Mammary epithelial cell (primary cell): ENCODE measurements at regions of chr15 and their contacts with region 1.

Region 1: GRCh38 chr15:86624261-86625036 is 544.8 kb downstream of the AGBL1 start:
- DNase-seq: peak; percentile 95
- H3K4me3 ChIP-seq: no peak overlapping the region
- H3K27ac ChIP-seq: no peak overlapping the region
- H3K4me1 ChIP-seq: peaks cover 19% of the 10 kb centered on the region
- H3K27me3 ChIP-seq: no peaks in the 10 kb centered on the region
- CTCF ChIP-seq: peak; percentile 58 to 72

Region 2: GRCh38 chr15:85858586-85859375 is 765.7 kb before region 1 on chr15:
- CTCF ChIA-PET with region 1: no interaction called
- dilution Hi-C with region 1: no loop called
- in situ Hi-C with region 1: loop called in 1 of 2 experiments (anchors 25 kb)
- intact Hi-C with region 1: no loop called
- DNase-seq: peak; percentile 48
- H3K4me3 ChIP-seq: no peak overlapping the region
- H3K27ac ChIP-seq: no peak overlapping the region
- H3K4me1 ChIP-seq: peaks cover 3% of the 10 kb centered on the region
- H3K27me3 ChIP-seq: no peaks in the 10 kb centered on the region
- CTCF ChIP-seq: peak; percentile 65 to 81

Region 3: GRCh38 chr15:86231864-86232721 is 392.4 kb before region 1 on chr15:
- CTCF ChIA-PET with region 1: no interaction called
- dilution Hi-C with region 1: no loop called
- in situ Hi-C with region 1: no loop called
- intact Hi-C with region 1: loop called (anchors 1 kb)
- DNase-seq: peak; percentile 29
- H3K4me3 ChIP-seq: no peak overlapping the region
- H3K27ac ChIP-seq: no peak overlapping the region
- H3K4me1 ChIP-seq: peaks cover 3% of the 10 kb centered on the region
- H3K27me3 ChIP-seq: no peaks in the 10 kb centered on the region
- CTCF ChIP-seq: peak; percentile 64 to 75

Region 4: GRCh38 chr15:86657305-86657704 is 32.9 kb after region 1 on chr15:
- CTCF ChIA-PET with region 1: no interaction called
- dilution Hi-C with region 1: no loop called
- in situ Hi-C with region 1: no loop called
- intact Hi-C with region 1: no loop called
- DNase-seq: no peak
- H3K4me3 ChIP-seq: no peak overlapping the region
- H3K27ac ChIP-seq: no peak overlapping the region
- H3K4me1 ChIP-seq: no peaks in the 10 kb centered on the region
- H3K27me3 ChIP-seq: no peaks in the 10 kb centered on the region
- CTCF ChIP-seq: no peak

Region 5: DNA sequence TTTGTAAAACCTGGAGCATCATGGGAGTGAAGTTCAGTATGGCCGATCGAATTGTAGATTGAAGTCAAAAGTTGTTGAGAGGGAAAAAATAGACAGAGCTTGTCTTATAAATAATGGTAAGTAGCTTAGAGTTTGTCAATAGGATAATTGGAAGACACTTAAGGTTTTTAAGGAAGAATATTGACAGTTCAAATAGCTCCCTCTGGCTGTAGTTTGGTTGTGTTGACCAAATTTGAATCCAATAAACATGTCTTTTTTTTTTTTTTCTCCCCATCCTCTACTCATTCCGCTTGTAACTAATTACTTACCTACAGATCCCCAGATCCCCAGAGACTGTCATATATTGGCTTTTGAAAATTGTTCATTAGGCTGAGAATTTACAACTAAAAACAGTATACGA is 132.2 kb after region 1 on chr15:
- CTCF ChIA-PET with region 1: interaction called, 7 read pairs
- dilution Hi-C with region 1: no loop called
- in situ Hi-C with region 1: no loop called
- intact Hi-C with region 1: loop called (anchors 1 kb)
- DNase-seq: no peak
- H3K4me3 ChIP-seq: no peak overlapping the region
- H3K27ac ChIP-seq: no peak overlapping the region
- H3K4me1 ChIP-seq: no peaks in the 10 kb centered on the region
- H3K27me3 ChIP-seq: peaks cover 3% of the 10 kb centered on the region
- CTCF ChIP-seq: peak in 1 of 2 donors; percentile 25

Region 6: GRCh38 chr15:86892774-86893449 is 268.5 kb after region 1 on chr15:
- CTCF ChIA-PET with region 1: no interaction called
- dilution Hi-C with region 1: no loop called
- in situ Hi-C with region 1: no loop called
- intact Hi-C with region 1: loop called (anchors 10 kb)
- DNase-seq: peak; percentile 76
- H3K4me3 ChIP-seq: no peak overlapping the region
- H3K27ac ChIP-seq: no peak overlapping the region
- H3K4me1 ChIP-seq: no peaks in the 10 kb centered on the region
- H3K27me3 ChIP-seq: peaks cover 3% of the 10 kb centered on the region
- CTCF ChIP-seq: no peak

Region 7: DNA sequence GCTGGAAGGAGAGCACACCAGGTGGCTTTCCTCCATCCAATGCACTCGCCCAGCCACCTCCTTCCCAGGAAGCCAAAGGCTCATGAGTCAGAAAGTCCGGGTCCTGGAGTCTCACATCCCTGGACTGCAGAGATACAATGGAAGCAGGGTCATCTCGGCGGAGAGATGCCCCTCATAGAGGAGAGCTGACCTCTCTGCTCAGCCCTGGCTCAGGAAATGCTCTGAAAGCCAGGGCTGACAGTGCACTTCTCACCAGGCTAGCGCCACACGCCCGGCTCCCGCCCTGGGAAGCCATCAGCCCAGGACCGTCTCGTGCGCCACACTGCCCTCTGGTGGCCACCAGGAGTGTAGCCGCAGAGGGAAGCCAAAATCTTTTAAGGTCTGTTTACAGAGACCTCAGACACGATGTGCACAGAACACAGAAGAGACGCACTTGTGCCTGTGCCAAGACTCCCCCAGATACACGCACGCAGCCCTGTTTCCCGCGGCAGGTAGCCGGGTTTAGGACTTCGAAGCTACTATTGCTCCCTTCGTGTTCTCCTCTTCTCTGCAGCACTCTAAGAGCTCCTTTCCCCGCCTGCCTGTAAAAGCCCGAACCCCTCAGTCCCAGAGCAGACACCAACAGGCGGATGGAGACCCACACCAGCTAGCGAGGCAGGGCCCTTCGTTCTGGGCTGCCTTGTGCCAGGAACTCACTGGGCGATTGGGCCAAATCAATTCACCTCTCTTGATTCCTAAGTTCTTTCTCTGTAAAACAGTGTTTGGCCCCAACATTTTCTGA is 1622.4 kb after region 1 on chr15:
- CTCF ChIA-PET with region 1: interaction called, 3 read pairs
- dilution Hi-C with region 1: no loop called
- in situ Hi-C with region 1: no loop called
- intact Hi-C with region 1: loop called (anchors 1 kb)
- DNase-seq: peak; percentile 52
- H3K4me3 ChIP-seq: no peak overlapping the region
- H3K27ac ChIP-seq: no peak overlapping the region
- H3K4me1 ChIP-seq: no peaks in the 10 kb centered on the region
- H3K27me3 ChIP-seq: no peaks in the 10 kb centered on the region
- CTCF ChIP-seq: peak; percentile 83 to 90

Region 8: GRCh38 chr15:88454867-88455810 is 1830.7 kb after region 1 on chr15:
- CTCF ChIA-PET with region 1: no interaction called
- dilution Hi-C with region 1: no loop called
- in situ Hi-C with region 1: no loop called
- intact Hi-C with region 1: loop called (anchors 10 kb)
- DNase-seq: peak; percentile 59
- H3K4me3 ChIP-seq: no peak overlapping the region
- H3K27ac ChIP-seq: no peak overlapping the region
- H3K4me1 ChIP-seq: no peaks in the 10 kb centered on the region
- H3K27me3 ChIP-seq: no peaks in the 10 kb centered on the region
- CTCF ChIP-seq: peak; percentile 89 to 90